HEK293T (cell line): ENCODE measurements at regions of chr1 and their contacts with region 1.

Region 1: GRCh38 chr1:165807613-165808012 is 19.8 kb upstream of the UCK2 start:
- DNase-seq: no peak

Region 2: GRCh38 chr1:165666152-165666825 is 141.3 kb before region 1 on chr1:
- CTCF ChIA-PET with region 1: no interaction called
- POLR2A ChIA-PET with region 1: no interaction called
- DNase-seq: no peak

Region 3: GRCh38 chr1:165737196-165737595 is 70.4 kb before region 1 on chr1:
- CTCF ChIA-PET with region 1: no interaction called
- POLR2A ChIA-PET with region 1: no interaction called
- DNase-seq: no peak

Region 4: DNA sequence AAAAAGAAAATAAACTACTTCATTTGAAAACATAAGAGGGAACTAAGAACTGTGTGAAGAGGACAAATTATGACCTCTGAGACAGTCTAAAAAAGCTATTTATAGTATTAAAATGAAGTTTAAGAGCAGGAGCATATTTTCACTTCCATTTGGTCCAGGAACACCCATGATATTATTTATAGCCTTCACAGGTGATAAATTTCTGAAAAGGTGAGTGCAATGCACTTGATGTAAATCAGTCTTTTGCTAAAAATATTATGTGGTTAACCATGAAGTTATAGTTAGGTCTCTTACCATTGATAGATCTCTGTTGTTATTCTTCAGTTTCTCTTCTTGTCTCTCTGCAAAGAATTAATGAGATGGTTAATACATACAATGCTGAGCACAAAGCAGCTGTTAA is 53.7 kb before region 1 on chr1:
- CTCF ChIA-PET with region 1: no interaction called
- POLR2A ChIA-PET with region 1: no interaction called
- DNase-seq: no peak

Region 5: GRCh38 chr1:165787741-165788140 is 19.9 kb before region 1 on chr1:
- CTCF ChIA-PET with region 1: no interaction called
- POLR2A ChIA-PET with region 1: no interaction called
- DNase-seq: no peak

Region 6: DNA sequence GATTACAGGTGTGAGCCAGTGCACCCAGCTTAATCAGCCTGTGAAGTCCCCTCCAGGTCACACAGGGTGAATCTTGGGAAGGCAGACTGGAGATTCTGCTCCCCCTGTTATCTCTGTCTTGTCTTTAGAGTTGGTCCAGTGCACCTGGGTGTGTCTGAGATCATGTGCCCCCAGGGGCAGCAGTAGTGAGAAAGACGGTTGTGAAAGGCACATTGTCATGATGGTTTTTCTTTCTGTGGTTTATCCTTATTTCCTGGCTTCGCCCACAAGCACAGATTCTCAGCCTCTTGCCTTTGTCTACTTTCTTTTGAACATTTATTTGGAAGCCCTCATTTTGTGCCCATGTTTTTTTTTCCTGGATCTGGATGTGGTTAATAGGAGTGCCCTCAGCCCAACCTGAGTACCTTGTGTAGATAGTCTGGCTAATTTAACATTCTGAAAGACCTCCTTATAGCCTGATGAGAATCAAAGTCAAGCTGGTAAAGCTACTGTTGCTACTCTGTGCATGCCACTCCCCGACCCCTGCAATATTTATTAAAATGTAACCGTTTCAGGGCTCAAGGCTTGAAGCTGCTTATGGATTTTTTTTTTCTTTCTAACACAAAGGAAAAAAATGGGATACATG is 43.5 kb after region 1 on chr1:
- CTCF ChIA-PET with region 1: interaction called, 10 read pairs
- POLR2A ChIA-PET with region 1: no interaction called
- DNase-seq: no peak